ENCODE measurements at regions of chr15 and their contacts with region 1.

Region 1: DNA sequence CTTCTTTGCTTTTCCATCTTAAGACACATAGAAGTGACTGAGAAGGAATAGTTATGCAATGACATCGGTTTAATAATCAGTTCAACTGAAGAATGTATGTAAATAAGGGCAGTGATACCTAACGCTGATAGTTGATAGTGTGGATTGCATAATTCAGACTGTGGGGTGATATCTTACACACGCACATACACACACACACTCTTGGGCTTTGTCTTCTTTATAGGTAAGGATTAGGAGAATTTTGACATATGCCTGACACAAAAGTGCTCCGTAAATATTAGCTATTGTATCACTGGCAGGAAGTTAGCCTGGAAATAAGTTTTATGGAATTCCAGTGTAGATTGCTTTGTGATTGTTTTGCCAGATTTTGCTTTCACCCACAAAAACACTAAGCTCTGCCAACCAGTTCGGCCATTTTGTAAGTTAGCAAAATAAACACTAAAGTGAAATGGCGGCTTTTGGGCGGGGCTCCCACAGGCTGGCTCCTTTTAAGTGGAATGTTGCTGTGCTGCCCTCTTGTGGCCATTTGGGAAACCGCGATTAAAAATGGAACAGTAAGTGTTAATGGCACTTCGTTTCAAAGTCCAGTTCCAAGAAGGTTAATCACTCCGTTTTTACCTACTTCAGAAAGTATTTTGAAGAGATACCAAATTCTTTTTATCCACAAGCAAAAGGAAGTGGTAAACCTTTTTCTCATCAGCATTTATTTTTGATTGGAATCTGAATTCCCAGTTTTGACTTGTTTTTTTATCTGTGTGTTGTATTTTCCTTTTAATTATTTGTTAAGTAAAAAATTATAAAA is 17.7 kb downstream of the CHD2 start:
- DNase-seq: peak; percentile 98
- H3K4me3 ChIP-seq: peak overlapping the region in 1 of 4 donors; percentile 15
- H3K27ac ChIP-seq: peak overlapping the region; percentile 81 to 99 (median 98)
- H3K4me1 ChIP-seq: peaks cover 43 to 98% (median 80%) of the 10 kb centered on the region in 4 donors
- H3K27me3 ChIP-seq: no peaks in the 10 kb centered on the region
- CTCF ChIP-seq: peak; percentile 84 to 99 (median 92)
- EP300 ChIP-seq: no peak
- POLR2A ChIP-seq: no peak

Region 2: DNA sequence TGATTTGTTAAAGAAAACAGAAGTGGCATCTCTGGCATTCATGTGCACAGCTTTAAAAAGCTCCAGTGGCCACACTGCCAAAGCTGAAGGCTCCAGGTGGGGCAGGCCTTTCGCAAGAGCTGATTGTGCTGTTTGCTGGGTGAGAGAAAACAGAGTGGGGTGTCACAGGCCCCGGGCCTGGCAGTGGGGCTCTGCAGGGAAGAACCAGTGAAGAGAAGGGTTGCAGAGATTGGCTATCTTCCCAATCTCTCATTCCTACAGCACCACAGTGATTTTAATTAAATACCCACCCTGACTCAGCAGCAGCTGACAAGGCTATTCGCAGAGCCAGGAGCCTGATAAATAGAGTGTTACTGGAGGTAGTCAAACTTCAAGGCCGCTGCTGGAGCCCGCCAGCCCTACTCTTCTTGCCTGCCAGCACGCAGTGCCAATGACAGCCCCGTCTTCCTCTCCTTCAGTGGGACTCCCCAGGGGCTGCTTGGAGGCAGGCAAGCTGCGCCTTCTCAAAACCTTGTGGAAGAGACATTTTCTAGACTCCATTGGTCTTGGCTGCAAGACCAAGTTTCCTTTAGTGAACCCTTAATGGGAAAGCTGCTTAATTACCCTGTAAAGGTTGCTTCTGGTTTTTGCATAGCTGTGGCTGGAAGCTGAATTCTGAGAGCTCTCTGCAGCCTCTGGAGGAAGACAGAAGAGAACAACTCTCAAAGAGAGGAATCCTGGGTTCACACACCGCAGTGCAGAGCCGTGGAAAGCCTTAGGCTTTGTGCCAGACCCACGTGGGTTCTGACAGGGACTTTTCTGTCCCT is 1290.1 kb before region 1 on chr15:
- in situ Hi-C with region 1: no loop called
- intact Hi-C with region 1: no loop called
- DNase-seq: peak; percentile 11
- H3K4me3 ChIP-seq: no peak overlapping the region
- H3K27ac ChIP-seq: peak overlapping the region in 3 of 4 donors; percentile 7 to 61 (median 41)
- H3K4me1 ChIP-seq: no peaks in the 10 kb centered on the region
- H3K27me3 ChIP-seq: no peaks in the 10 kb centered on the region
- CTCF ChIP-seq: no peak
- EP300 ChIP-seq: no peak
- POLR2A ChIP-seq: no peak

Region 3: GRCh38 chr15:92625251-92625980 is 292.4 kb before region 1 on chr15:
- in situ Hi-C with region 1: no loop called
- intact Hi-C with region 1: loop called (anchors 5 kb)
- DNase-seq: no peak
- H3K4me3 ChIP-seq: no peak overlapping the region
- H3K27ac ChIP-seq: peak overlapping the region; percentile 40 to 64 (median 56)
- H3K4me1 ChIP-seq: peaks cover 6 to 25% (median 13%) of the 10 kb centered on the region in 4 donors
- H3K27me3 ChIP-seq: no peaks in the 10 kb centered on the region
- CTCF ChIP-seq: no peak
- EP300 ChIP-seq: no peak
- POLR2A ChIP-seq: no peak

Region 4: GRCh38 chr15:92797168-92797951 is 120.4 kb before region 1 on chr15:
- in situ Hi-C with region 1: loop called in 1 of 4 experiments (anchors 10 kb)
- intact Hi-C with region 1: loop called (anchors 5 kb)
- DNase-seq: no peak
- H3K4me3 ChIP-seq: no peak overlapping the region
- H3K27ac ChIP-seq: peak overlapping the region in 3 of 4 donors; percentile 28 to 52 (median 31)
- H3K4me1 ChIP-seq: peaks cover 4 to 25% (median 12%) of the 10 kb centered on the region in 4 donors
- H3K27me3 ChIP-seq: no peaks in the 10 kb centered on the region
- CTCF ChIP-seq: peak; percentile 75 to 85 (median 83)
- EP300 ChIP-seq: no peak
- POLR2A ChIP-seq: no peak

Region 5: GRCh38 chr15:92803847-92804609 is 113.8 kb before region 1 on chr15:
- in situ Hi-C with region 1: loop called in 1 of 4 experiments (anchors 10 kb)
- intact Hi-C with region 1: loop called (anchors 5 kb)
- DNase-seq: peak; percentile 79
- H3K4me3 ChIP-seq: no peak overlapping the region
- H3K27ac ChIP-seq: peak overlapping the region; percentile 85 to 98 (median 87)
- H3K4me1 ChIP-seq: peaks cover 16 to 62% (median 30%) of the 10 kb centered on the region in 4 donors
- H3K27me3 ChIP-seq: no peaks in the 10 kb centered on the region
- CTCF ChIP-seq: no peak
- EP300 ChIP-seq: peak; percentile 90
- POLR2A ChIP-seq: peak; percentile 22

Region 6: GRCh38 chr15:92810418-92811138 is 107.2 kb before region 1 on chr15:
- in situ Hi-C with region 1: loop called in 1 of 4 experiments (anchors 10 kb)
- intact Hi-C with region 1: no loop called
- DNase-seq: peak; percentile 76
- H3K4me3 ChIP-seq: peak overlapping the region; percentile 1 to 59 (median 46)
- H3K27ac ChIP-seq: peak overlapping the region; percentile 94 to 98 (median 96)
- H3K4me1 ChIP-seq: peaks cover 0 to 38% (median 29%) of the 10 kb centered on the region in 4 donors
- H3K27me3 ChIP-seq: no peaks in the 10 kb centered on the region
- CTCF ChIP-seq: no peak
- EP300 ChIP-seq: no peak
- POLR2A ChIP-seq: peak; percentile 42

Region 7: DNA sequence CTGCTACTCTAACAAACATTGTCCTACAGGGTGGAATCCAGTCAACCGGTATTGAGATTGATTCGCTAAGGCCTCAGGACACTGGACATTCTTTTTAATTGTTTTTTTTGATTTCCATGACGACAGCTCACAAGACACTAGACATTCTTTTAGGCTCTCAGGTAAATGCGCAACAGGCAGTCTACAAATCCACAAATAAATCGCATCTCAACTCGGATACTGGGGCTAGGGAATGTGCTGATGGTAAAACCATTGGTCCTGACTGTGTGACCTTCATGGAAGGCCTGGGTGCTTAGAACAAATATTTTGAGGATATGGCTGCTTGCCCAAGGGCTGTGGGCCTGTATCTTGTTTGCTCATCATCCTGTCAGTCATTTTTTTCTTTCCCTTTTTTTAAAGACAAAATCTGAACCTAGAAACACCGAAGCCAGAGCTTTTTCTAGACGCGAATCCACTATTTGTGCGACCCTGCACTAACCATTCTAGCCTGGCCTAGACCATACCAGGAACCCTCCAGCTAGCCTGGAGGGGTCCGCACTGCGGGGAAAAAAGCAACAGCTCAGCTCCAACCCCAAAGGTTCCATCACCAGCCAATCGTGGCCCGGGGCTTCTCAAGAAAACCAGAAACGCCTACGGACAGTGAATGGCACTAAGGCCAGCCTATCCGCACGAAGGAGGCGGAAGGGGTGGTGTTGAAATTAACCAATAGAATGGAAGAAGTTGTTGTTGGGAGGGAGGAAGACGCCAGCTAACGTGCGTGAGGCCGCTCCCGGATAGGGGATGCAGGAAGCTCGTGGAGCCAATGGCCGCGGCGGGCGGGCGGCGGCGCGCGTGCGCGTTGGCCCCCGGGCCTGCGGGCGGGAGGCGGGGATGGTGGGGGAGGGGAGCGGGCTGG is 35.8 kb before region 1 on chr15:
- in situ Hi-C with region 1: no loop called
- intact Hi-C with region 1: loop called (anchors 1 kb)
- DNase-seq: peak; percentile 99
- H3K4me3 ChIP-seq: peak overlapping the region; percentile 23 to 100 (median 92)
- H3K27ac ChIP-seq: peak overlapping the region; percentile 98 to 100 (median 100)
- H3K4me1 ChIP-seq: peaks cover 19 to 56% (median 35%) of the 10 kb centered on the region in 4 donors
- H3K27me3 ChIP-seq: no peaks in the 10 kb centered on the region
- CTCF ChIP-seq: peak in 1 of 5 experiments; percentile 18
- EP300 ChIP-seq: no peak
- POLR2A ChIP-seq: peak; percentile 96

Measured in transverse colon (tissue), 4 donors.